ENCODE measurements at regions of chr2 and their contacts with region 1.

Region 1: DNA sequence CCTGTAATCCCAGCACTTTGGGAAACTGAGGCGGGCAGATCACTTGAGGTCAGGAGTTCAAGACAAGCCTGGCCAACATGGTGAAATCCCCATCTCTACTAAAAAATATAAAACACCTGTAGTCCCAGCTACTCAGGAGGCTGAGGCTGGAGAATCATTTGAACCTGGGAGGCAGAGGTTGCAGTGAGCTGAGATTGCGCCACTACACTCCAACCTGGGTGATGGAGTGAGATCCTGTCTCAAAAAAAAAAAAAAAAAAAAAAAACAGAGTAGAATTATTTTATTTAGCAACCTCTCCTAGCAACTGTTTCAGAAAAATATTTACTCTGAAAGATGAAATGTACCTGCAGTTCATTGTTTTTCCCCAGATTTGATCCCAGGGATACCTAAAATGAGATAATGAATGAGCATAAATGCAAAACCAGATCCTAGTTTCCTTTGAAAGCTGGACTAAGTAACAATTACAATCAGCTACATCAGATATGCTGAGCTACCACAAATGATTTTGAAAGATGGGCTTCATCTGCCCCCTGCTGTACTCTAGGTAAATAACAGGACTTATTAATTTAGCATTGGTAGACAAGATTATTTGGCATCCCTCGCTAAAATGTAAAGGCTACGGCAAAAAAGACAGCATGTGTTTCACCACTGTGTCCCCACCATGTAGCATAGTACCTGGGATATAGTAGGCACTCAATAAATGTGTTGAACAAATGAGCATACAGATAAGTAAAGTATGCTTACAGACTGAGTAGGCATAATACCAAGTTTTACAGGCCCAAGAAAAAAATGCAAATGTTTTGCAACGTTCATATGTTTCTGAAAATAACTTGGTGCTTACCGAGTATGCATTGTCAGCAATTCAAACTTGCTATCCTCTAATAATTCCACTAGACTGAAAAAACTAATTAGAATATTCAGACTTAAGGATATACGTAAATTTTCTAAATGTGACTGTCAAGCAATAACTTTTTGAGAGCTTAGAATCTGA is 102.5 kb downstream of the ATL2 start:
- DNase-seq: peak in 2 of 5 donors; percentile 22 to 32
- ATAC-seq: peak; percentile 32 to 81 (median 76)
- H3K4me3 ChIP-seq: no peak overlapping the region
- H3K27ac ChIP-seq: no peak overlapping the region
- H3K4me1 ChIP-seq: peaks cover 0 to 3% (median 0%) of the 10 kb centered on the region in 12 donors
- H3K27me3 ChIP-seq: no peaks in the 10 kb centered on the region
- CTCF ChIP-seq: peak; percentile 42 to 78 (median 68)
- POLR2A ChIP-seq: no peak

Region 2: DNA sequence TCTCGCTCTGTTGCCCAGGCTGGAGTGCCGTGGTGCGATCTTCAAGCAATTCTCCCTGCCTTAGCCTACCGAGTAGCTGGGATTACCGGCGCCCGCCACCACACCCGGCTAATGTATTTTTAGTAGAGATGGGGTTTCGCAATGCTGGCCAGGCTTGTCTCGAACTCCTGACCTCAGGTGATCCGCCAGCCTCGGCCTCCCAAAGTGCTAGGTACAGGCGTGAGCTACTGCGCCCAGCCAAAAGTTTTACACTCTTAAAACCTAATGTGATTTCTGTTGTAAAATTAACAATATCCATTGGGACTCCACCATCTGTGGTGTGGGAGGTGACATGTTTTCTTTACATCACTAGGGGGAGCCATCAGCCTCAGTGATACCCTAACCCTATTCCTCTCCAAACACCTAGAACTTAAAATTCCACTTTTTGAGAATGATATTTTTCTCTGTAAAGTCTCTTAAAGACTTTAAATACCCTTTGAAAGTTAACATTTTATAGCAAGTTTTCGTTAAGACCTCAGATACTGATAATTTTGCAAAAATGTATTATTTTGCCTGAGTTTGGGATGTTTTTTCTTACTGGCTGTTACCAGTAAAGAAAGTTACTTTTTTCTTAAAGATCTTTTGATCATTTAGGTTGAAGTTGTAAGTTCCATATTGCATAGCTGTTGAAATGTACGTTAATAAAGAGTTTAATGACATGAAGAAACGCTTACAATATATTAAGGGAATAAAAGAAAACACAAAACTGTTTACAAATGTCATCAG is 1106.2 kb before region 1 on chr2:
- intact Hi-C with region 1: loop called in 1 of 10 experiments (anchors 10 kb)
- DNase-seq: no peak
- ATAC-seq: peak in 3 of 4 donors; percentile 59 to 83 (median 66)
- H3K4me3 ChIP-seq: no peak overlapping the region
- H3K27ac ChIP-seq: no peak overlapping the region
- H3K4me1 ChIP-seq: no peaks in the 10 kb centered on the region
- H3K27me3 ChIP-seq: no peaks in the 10 kb centered on the region
- CTCF ChIP-seq: peak; percentile 48 to 74 (median 65)
- POLR2A ChIP-seq: no peak

Region 3: GRCh38 chr2:37389989-37390765 is 884.4 kb before region 1 on chr2:
- intact Hi-C with region 1: loop called in 6 of 10 experiments (anchors 5 to 10 kb)
- DNase-seq: peak in 3 of 5 donors; percentile 30 to 34 (median 31)
- ATAC-seq: peak in 3 of 4 donors; percentile 67 to 93 (median 74)
- H3K4me3 ChIP-seq: no peak overlapping the region
- H3K27ac ChIP-seq: peak overlapping the region in 8 of 12 donors; percentile 26 to 87 (median 54)
- H3K4me1 ChIP-seq: peaks cover 0 to 46% (median 9%) of the 10 kb centered on the region in 12 donors
- H3K27me3 ChIP-seq: no peaks in the 10 kb centered on the region
- CTCF ChIP-seq: no peak
- POLR2A ChIP-seq: no peak

Region 4: GRCh38 chr2:37402636-37403035 is 871.9 kb before region 1 on chr2:
- intact Hi-C with region 1: loop called in 6 of 10 experiments (anchors 5 to 10 kb)
- DNase-seq: no peak
- ATAC-seq: no peak
- H3K4me3 ChIP-seq: no peak overlapping the region
- H3K27ac ChIP-seq: no peak overlapping the region
- H3K4me1 ChIP-seq: peaks cover 0 to 4% (median 0%) of the 10 kb centered on the region in 12 donors
- H3K27me3 ChIP-seq: no peaks in the 10 kb centered on the region
- CTCF ChIP-seq: no peak
- POLR2A ChIP-seq: no peak

Region 5: DNA sequence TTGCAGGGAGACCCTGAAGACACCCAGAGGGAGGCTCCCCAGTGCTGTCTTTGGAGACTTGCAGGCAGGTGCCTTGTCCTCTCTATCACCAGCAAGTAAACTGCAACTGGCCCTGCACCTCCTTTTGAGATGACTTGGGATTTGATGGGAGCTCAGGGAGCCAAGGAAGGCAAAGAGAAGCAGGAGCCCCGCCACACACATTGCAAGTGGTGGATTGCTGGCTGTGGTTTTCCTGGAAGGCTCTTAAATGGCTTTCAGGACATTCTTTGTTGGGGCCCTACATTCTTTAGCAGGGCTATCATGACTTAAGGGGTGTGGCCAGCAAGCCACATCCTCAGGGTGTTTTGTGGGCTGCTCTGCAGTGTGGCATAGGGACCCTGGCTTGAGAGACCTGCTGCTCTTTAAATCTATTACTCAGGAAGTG is 563.3 kb before region 1 on chr2:
- intact Hi-C with region 1: no loop called
- DNase-seq: no peak
- ATAC-seq: no peak
- H3K4me3 ChIP-seq: no peak overlapping the region
- H3K27ac ChIP-seq: no peak overlapping the region
- H3K4me1 ChIP-seq: peaks cover 0 to 39% (median 0%) of the 10 kb centered on the region in 12 donors
- H3K27me3 ChIP-seq: no peaks in the 10 kb centered on the region
- CTCF ChIP-seq: no peak
- POLR2A ChIP-seq: no peak

Region 6: GRCh38 chr2:37890893-37891495 is 383.6 kb before region 1 on chr2:
- intact Hi-C with region 1: loop called in 5 of 10 experiments (anchors 5 to 10 kb)
- DNase-seq: peak; percentile 58 to 80 (median 70)
- ATAC-seq: peak; percentile 82 to 94 (median 90)
- H3K4me3 ChIP-seq: no peak overlapping the region
- H3K27ac ChIP-seq: no peak overlapping the region
- H3K4me1 ChIP-seq: peaks cover 0 to 50% (median 3%) of the 10 kb centered on the region in 12 donors
- H3K27me3 ChIP-seq: peaks cover 0 to 9% (median 0%) of the 10 kb centered on the region in 9 donors
- CTCF ChIP-seq: peak; percentile 67 to 85 (median 75)
- POLR2A ChIP-seq: no peak

Region 7: DNA sequence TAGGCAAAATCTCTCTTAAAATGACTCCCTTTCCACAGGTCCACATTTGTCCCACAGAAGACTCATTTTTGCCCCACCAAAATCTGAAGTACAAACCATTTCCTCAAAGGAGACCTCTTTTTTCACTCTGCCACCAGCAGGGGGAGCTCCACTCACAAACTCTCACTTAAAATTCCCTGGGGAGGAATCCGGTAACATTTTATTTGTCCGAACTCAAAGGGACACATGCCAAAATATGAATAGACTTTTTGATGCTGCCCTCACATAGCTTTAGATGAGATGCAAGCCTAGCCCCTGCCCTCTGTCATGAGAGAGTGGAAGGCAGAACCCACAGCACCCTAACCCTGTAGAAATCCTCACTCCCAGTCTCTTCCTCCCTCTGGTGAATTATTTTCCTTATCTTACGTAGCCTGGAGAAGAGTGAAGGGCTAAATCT is 292.4 kb before region 1 on chr2:
- intact Hi-C with region 1: loop called (anchors 1 to 5 kb)
- DNase-seq: peak in 4 of 5 donors; percentile 65 to 78 (median 70)
- ATAC-seq: peak in 2 of 4 donors; percentile 42 to 61
- H3K4me3 ChIP-seq: peak overlapping the region in 9 of 12 donors; percentile 21 to 48 (median 32)
- H3K27ac ChIP-seq: no peak overlapping the region
- H3K4me1 ChIP-seq: peaks cover 0 to 8% (median 0%) of the 10 kb centered on the region in 12 donors
- H3K27me3 ChIP-seq: no peaks in the 10 kb centered on the region
- CTCF ChIP-seq: peak; percentile 80 to 91 (median 84)
- POLR2A ChIP-seq: no peak

Region 8: DNA sequence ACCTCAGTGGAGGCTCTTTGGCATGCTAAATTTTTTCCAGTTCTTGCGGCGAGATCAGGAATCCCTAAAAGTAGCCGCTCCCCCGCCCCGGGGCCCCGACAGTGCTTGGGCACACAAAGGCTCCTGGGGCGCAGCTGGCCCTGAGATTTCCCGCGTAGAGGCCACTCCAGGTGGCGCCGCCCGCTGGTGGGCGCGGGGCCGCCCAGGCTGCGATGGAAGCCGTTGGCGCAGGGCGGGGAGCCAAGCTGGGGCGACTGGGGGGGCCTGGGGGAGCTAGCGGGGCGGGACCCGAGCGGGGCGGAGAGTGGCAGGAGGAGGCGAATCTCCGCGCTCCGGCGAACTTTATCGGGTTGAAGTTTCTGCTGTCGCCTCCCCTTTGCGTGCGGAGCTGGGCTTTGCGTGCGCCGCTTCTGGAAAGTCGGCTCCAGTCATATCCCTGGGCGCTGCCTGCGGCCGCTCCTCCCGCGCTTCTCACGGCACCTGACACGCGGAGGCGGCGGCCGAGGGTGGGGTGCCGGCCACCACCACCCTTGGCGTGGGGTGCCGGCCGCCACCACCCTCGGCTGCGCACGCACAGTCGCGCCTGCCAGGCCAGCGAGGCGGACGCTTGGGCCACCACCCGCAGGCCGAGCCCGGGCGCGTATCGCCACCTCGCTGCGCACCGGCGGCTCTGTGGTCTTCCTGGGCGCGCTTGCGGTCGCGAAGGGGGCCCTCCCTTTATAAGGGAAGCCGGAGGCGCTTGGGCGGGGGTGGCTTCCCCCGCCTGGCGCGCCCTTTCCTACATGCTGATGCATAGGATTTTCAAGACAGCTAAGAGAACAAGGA is 197.8 kb before region 1 on chr2:
- intact Hi-C with region 1: loop called in 5 of 10 experiments (anchors 2 to 10 kb)
- DNase-seq: peak; percentile 81 to 89 (median 83)
- ATAC-seq: peak; percentile 33 to 79 (median 72)
- H3K4me3 ChIP-seq: peak overlapping the region; percentile 30 to 77 (median 65)
- H3K27ac ChIP-seq: peak overlapping the region; percentile 78 to 97 (median 93)
- H3K4me1 ChIP-seq: peaks cover 0 to 52% (median 22%) of the 10 kb centered on the region in 12 donors
- H3K27me3 ChIP-seq: peaks cover 0 to 55% (median 32%) of the 10 kb centered on the region in 9 donors
- CTCF ChIP-seq: peak; percentile 17 to 60 (median 34)
- POLR2A ChIP-seq: peak in 1 of 2 donors; percentile 69

Region 9: DNA sequence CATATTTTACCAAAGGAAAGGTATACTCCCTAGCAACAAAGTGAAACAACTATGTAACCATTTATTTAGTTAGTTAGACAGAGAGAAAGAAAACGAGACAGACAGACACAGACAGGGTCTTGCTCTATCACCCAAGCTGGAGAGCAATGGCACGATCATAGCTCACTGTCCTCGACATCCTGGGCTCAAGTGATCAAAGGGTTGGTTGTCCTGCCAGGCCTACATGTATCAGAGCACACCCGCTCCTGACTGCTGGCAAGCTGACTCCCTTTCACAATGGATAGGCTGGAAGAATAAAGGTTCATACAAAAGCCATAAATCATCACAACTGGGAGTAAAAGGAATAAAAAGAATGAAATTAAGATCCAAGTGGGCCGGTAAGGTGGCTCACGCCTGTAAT is 49.0 kb after region 1 on chr2:
- intact Hi-C with region 1: no loop called
- DNase-seq: no peak
- ATAC-seq: no peak
- H3K4me3 ChIP-seq: no peak overlapping the region
- H3K27ac ChIP-seq: no peak overlapping the region
- H3K4me1 ChIP-seq: peaks cover 0 to 23% (median 11%) of the 10 kb centered on the region in 12 donors
- H3K27me3 ChIP-seq: no peaks in the 10 kb centered on the region
- CTCF ChIP-seq: no peak
- POLR2A ChIP-seq: no peak

Region 10: DNA sequence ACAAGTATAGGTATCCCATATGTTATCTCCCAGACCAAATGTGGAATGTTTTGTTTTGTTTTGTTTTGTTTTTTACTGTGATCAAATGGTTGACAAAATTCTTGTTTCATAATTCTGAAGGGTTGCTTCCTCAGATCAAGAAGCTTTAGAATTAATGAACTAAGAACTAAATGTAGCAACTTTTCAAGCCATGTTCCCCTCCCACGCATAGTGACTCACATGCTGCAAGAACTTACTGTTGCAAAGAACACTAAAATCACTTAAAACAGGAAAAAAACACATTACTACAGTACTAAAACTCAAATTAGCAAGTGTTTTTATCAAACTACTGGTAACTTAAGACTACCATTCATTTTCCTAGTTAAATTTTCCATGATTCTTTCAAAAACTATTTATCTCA is 297.6 kb after region 1 on chr2:
- intact Hi-C with region 1: no loop called
- DNase-seq: no peak
- ATAC-seq: peak in 2 of 4 donors; percentile 50 to 51
- H3K4me3 ChIP-seq: no peak overlapping the region
- H3K27ac ChIP-seq: peak overlapping the region in 1 of 12 donors; percentile 2
- H3K4me1 ChIP-seq: peaks cover 0 to 16% (median 0%) of the 10 kb centered on the region in 12 donors
- H3K27me3 ChIP-seq: no peaks in the 10 kb centered on the region
- CTCF ChIP-seq: no peak
- POLR2A ChIP-seq: no peak